A673 (cell line): ENCODE measurements at regions of chr13 and their contacts with region 1.

Region 1: GRCh38 chr13:51270623-51271415 is 48.6 kb downstream of the FAM124A start:
- DNase-seq: no peak
- H3K4me3 ChIP-seq: no peak overlapping the region
- H3K27ac ChIP-seq: no peak overlapping the region
- H3K4me1 ChIP-seq: no peaks in the 10 kb centered on the region
- H3K27me3 ChIP-seq: no peaks in the 10 kb centered on the region
- CTCF ChIP-seq: no peak

Region 2: GRCh38 chr13:51154029-51154555 is 116.7 kb before region 1 on chr13:
- CTCF ChIA-PET with region 1: interaction called, 10 read pairs
- POLR2A ChIA-PET with region 1: no interaction called
- intact Hi-C with region 1: no loop called
- DNase-seq: peak; percentile 29
- H3K4me3 ChIP-seq: no peak overlapping the region
- H3K27ac ChIP-seq: no peak overlapping the region
- H3K4me1 ChIP-seq: peaks cover 10% of the 10 kb centered on the region
- H3K27me3 ChIP-seq: no peaks in the 10 kb centered on the region
- CTCF ChIP-seq: no peak